ENCODE measurements at regions of chr11 and their contacts with region 1.

Region 1: DNA sequence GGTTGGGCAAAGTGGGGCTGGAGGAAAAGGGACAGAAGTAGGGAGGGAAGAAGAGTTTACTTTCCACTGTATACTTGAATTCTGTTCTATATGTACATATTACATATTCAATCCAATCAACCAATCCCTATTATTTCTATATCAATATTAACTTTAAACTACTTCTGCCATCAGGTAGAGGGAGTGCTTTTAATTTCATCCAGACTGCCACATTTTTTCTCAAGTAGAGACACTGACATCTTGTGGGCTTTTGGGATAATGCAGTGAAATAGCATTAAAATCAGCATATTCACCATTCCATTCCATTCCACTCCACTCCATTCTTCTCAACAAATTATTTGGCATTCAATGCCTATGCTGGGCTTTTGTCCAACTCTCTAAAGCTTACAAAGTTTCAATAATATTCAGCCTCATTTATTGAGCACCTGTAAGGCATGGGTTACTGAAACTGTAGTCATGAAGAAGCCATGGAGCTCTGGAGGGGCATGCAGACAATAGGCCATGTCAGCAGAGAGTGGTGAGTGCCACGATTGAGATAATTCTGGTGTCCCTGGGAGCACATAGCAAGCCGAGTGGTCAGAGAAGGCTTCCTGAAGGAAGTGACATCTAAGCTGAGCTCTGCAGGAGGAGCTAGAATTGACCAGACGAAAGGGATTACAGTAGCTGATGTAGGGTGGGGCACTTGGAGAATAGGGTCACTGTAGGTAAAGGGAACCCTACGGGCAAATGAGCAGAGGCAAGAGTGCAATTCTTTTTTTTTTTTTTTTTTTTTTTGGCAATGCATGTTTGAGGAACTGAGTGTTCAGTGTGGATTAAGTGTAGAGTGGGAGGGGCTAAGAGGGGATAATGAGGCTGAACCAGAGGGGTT is 12.8 kb upstream of the CLPB start:
- DNase-seq: peak; percentile 61
- H3K4me3 ChIP-seq: no peak overlapping the region
- H3K27ac ChIP-seq: no peak overlapping the region
- H3K4me1 ChIP-seq: no peaks in the 10 kb centered on the region
- H3K27me3 ChIP-seq: no peaks in the 10 kb centered on the region
- CTCF ChIP-seq: peak; percentile 76 to 80

Region 2: GRCh38 chr11:72144807-72145560 is 302.2 kb before region 1 on chr11:
- CTCF ChIA-PET with region 1: no interaction called
- dilution Hi-C with region 1: no loop called
- in situ Hi-C with region 1: no loop called
- intact Hi-C with region 1: no loop called
- DNase-seq: peak; percentile 88
- H3K4me3 ChIP-seq: no peak overlapping the region
- H3K27ac ChIP-seq: peak overlapping the region; percentile 75
- H3K4me1 ChIP-seq: peaks cover 49% of the 10 kb centered on the region
- H3K27me3 ChIP-seq: no peaks in the 10 kb centered on the region
- CTCF ChIP-seq: no peak

Region 3: GRCh38 chr11:72497731-72498130 is 50.6 kb after region 1 on chr11:
- CTCF ChIA-PET with region 1: no interaction called
- dilution Hi-C with region 1: loop called (anchors 5 kb)
- in situ Hi-C with region 1: no loop called
- intact Hi-C with region 1: no loop called
- DNase-seq: no peak
- H3K4me3 ChIP-seq: no peak overlapping the region
- H3K27ac ChIP-seq: no peak overlapping the region
- H3K4me1 ChIP-seq: no peaks in the 10 kb centered on the region
- H3K27me3 ChIP-seq: no peaks in the 10 kb centered on the region
- CTCF ChIP-seq: no peak

Region 4: GRCh38 chr11:72525466-72525865 is 78.3 kb after region 1 on chr11:
- CTCF ChIA-PET with region 1: no interaction called
- dilution Hi-C with region 1: no loop called
- in situ Hi-C with region 1: no loop called
- intact Hi-C with region 1: no loop called
- DNase-seq: no peak
- H3K4me3 ChIP-seq: no peak overlapping the region
- H3K27ac ChIP-seq: no peak overlapping the region
- H3K4me1 ChIP-seq: no peaks in the 10 kb centered on the region
- H3K27me3 ChIP-seq: no peaks in the 10 kb centered on the region
- CTCF ChIP-seq: no peak

Region 5: DNA sequence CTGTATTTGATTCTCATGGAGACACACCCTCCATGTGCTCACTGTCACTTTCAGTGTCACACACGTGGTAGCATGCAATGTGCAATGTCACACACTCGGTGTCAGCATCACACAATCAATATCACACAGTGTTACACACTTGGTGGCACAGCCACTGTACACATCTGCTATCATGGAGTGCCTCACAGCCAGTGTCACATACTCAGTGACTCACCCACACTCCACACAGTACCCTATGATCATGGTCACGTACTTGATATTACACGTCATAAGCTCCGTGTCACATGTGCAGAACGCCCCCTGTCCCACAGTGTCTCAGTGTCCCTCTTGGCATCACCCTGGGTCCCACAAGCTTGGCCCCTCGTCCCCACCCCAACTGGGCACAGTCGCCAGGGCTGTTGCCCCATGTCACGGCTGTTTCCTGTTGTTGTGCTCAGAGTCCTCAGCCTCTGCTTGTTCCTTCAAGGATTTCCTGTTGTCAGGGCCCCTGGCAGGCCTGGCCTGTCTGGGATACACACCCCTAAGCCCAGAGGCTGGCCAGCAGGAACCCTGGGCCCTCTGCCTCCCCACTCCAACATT is 177.6 kb after region 1 on chr11:
- CTCF ChIA-PET with region 1: no interaction called
- dilution Hi-C with region 1: loop called (anchors 5 kb)
- in situ Hi-C with region 1: no loop called
- intact Hi-C with region 1: no loop called
- DNase-seq: no peak
- H3K4me3 ChIP-seq: no peak overlapping the region
- H3K27ac ChIP-seq: no peak overlapping the region
- H3K4me1 ChIP-seq: no peaks in the 10 kb centered on the region
- H3K27me3 ChIP-seq: no peaks in the 10 kb centered on the region
- CTCF ChIP-seq: no peak

Measured in mammary epithelial cell (primary cell).